Motor neuron (in vitro differentiated cells): ENCODE measurements at regions of chr12 and their contacts with region 1.

Region 1: GRCh38 chr12:87848248-87848868 is 180.8 kb downstream of the C12orf50 start:
- ATAC-seq: peak in 1 of 8 experiments; percentile 54
- H3K4me3 ChIP-seq: no peak overlapping the region
- H3K27ac ChIP-seq: no peak overlapping the region
- H3K4me1 ChIP-seq: no peaks in the 10 kb centered on the region

Region 2: DNA sequence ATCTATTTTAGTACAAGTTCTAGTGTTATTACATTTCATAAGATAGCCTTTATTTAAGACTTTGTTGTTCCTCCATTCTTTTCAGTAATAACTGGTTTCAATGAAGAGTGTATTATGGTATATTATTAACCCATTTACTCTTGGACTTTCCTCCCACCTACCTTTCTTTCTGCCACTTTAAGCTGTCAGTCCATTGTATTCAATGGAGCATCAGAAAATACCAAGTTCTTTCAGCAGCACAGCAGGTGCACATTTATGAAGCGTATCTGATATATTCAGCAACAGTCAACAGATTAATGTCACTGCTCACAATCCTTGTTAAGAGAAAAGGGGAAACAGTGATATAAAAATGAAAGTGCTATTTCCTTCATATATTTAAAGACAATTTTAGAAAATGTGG is 480.1 kb before region 1 on chr12:
- in situ Hi-C with region 1: loop called in 1 of 9 experiments (anchors 25 kb)
- ATAC-seq: no peak
- H3K4me3 ChIP-seq: no peak overlapping the region
- H3K27ac ChIP-seq: no peak overlapping the region
- H3K4me1 ChIP-seq: peaks cover 0 to 2% of the 10 kb centered on the region in 2 donors